ENCODE measurements at regions of chr16 and their contacts with region 1.

Region 1: DNA sequence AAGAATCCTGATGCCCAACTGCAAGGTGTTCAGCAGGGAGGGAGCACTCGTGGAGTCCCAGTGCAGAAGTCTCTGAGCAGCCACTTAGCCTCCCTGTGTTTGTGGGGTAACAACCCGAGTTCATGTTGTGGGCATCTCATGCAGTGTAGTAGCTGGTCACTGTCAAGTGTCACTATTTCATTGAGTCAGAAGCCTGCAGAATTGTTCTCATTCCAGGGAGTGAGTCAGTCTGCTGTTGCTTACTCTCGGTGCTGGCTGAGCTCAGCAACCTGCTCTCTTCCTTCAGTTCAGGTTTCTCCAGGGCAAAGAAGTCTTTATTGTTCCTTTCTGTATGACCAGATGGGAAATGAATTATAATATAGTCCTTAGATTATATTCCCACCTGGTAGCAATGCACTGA is 24.1 kb downstream of the HMOX2 start:
- DNase-seq: peak; percentile 25
- ATAC-seq: peak; percentile 77
- H3K4me3 Mint-ChIP-seq: no peak overlapping the region
- H3K27ac Mint-ChIP-seq: no peak overlapping the region
- H3K4me1 Mint-ChIP-seq: peaks cover 81% of the 10 kb centered on the region
- H3K27me3 Mint-ChIP-seq: no peaks in the 10 kb centered on the region
- CTCF ChIP-seq: no peak

Region 2: DNA sequence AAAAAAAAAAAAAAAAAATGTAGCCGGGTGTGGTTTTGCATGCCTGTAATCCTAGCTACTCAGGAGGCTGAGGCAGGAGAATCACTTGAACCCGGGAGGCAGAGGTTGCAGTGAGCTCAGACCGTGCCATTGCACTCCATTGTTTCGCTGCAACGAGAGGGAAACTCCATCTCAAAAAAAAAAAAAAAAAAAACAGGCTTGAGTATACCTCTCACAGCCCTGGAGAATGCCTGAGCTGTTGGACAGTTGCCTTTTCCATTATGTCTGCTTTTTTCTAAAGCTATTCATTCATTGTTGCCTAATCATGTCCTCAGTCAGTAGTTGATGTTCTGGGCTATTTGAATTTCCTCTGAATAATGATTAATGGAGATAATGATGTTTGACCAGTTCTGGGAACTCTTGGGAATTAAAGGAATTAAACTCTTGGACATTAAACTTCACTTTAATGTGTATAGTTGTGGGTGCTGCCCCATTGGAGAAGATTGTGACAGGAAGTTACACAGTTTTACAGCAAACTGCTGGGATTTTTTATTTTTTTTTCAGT is 12.2 kb before region 1 on chr16:
- CTCF ChIA-PET with region 1: interaction called, 12 read pairs
- POLR2A ChIA-PET with region 1: interaction called, 8 read pairs
- intact Hi-C with region 1: no loop called
- DNase-seq: no peak
- ATAC-seq: peak; percentile 43
- H3K4me3 Mint-ChIP-seq: no peak overlapping the region
- H3K27ac Mint-ChIP-seq: peak overlapping the region; percentile 86
- H3K4me1 Mint-ChIP-seq: peaks cover 55% of the 10 kb centered on the region
- H3K27me3 Mint-ChIP-seq: no peaks in the 10 kb centered on the region
- CTCF ChIP-seq: no peak

Region 3: GRCh38 chr16:4634768-4635167 is 134.5 kb after region 1 on chr16:
- CTCF ChIA-PET with region 1: no interaction called
- POLR2A ChIA-PET with region 1: no interaction called
- intact Hi-C with region 1: no loop called
- DNase-seq: no peak
- ATAC-seq: no peak
- H3K4me3 Mint-ChIP-seq: no peak overlapping the region
- H3K27ac Mint-ChIP-seq: no peak overlapping the region
- H3K4me1 Mint-ChIP-seq: peaks cover 20% of the 10 kb centered on the region
- H3K27me3 Mint-ChIP-seq: no peaks in the 10 kb centered on the region
- CTCF ChIP-seq: no peak

Region 4: GRCh38 chr16:4646773-4647643 is 146.7 kb after region 1 on chr16:
- CTCF ChIA-PET with region 1: no interaction called
- POLR2A ChIA-PET with region 1: no interaction called
- intact Hi-C with region 1: no loop called
- DNase-seq: peak; percentile 50
- ATAC-seq: peak; percentile 32
- H3K4me3 Mint-ChIP-seq: no peak overlapping the region
- H3K27ac Mint-ChIP-seq: peak overlapping the region; percentile 30
- H3K4me1 Mint-ChIP-seq: peaks cover 39% of the 10 kb centered on the region
- H3K27me3 Mint-ChIP-seq: no peaks in the 10 kb centered on the region
- CTCF ChIP-seq: no peak